ENCODE measurements at regions of chr11 and their contacts with region 1.

Region 1: DNA sequence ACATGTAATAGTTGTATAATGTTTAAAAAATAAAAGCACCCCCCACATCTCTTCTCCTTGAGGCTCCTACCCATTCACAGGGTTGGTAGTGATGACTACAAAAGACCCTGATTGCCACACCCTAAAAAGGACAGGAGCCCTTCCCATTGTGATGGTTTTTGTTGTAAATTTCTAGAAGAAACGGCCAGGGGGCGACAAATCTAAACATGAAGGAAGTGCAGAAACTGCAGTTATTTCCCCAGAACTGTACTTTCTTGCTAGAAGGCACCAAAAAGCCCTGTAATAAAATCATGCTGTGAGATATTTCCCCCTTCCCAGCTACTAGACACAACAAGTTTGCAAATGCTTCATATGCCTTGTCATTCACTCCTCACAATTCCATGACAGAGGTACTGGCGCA is 10.8 kb downstream of the PRR5L start:
- DNase-seq: peak; percentile 72
- H3K4me3 Mint-ChIP-seq: no peak overlapping the region
- H3K27ac Mint-ChIP-seq: no peak overlapping the region
- H3K4me1 Mint-ChIP-seq: peaks cover 4% of the 10 kb centered on the region
- H3K27me3 Mint-ChIP-seq: peaks cover 8% of the 10 kb centered on the region

Region 2: DNA sequence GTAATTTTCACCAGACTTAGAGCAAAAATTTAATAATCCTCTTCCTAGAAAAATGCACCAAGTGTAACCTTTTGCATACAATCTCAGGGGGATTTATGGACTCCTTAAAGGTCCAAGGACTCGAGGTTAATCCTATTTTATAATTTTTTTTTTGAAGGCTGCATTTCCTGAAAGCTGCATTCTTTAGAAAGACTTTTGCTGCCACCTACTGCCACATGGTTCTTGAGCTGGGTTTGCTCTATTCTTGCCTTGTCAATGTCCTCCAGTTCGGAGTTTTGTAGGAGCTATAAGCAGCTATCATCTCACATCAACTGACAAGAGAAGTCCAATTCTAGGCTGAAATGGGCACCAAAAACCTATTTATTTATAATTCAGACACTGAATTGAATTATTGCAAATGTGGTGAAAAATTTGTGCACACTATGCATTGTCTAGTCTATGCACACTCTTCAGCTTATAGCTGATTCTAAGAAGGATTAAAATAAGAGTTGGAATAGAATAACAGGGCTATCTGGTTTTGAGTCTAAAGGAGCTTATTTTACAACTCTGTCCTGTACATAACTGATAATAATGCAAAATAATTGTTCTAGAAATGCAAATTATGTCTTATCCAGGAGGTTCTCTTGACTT is 171.9 kb after region 1 on chr11:
- intact Hi-C with region 1: loop called (anchors 1 kb)
- DNase-seq: peak; percentile 82
- H3K4me3 Mint-ChIP-seq: no peak overlapping the region
- H3K27ac Mint-ChIP-seq: no peak overlapping the region
- H3K4me1 Mint-ChIP-seq: peaks cover 10% of the 10 kb centered on the region
- H3K27me3 Mint-ChIP-seq: no peaks in the 10 kb centered on the region

Measured in activated CD4-positive, alpha-beta T cell treated with anti-CD3 and anti-CD28 coated beads, Interleukin-2, amount 10 ng/mL, durations not matched to agents 24 days and 14 days (primary cell).